ENCODE measurements at regions of chr9 and their contacts with region 1.

Region 1: DNA sequence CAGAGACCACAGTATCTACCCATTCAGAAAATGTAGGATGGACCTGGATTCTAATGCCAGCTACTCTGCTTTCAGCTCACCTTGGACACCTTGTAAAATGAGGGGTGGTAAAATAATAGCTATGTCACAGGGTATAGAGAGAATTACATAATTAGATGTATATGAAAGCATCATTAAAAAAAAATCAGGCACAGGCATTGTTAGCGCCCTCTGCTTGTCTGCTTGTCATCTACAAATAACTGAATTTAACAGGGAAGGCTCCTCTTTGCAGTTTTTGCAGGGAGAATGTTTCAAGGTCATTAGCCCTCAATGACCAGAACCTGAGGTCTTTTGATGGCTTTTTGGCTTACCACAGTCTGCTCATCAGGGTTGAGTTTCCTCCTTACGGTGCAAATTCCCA is 58.0 kb downstream of the GPR21 start:
- DNase-seq: no peak
- H3K4me3 ChIP-seq: no peak overlapping the region
- H3K27ac ChIP-seq: peak overlapping the region; percentile 67 to 69; a peak in 2 of 4 replicates
- H3K4me1 ChIP-seq: peaks cover 5 to 27% of the 10 kb centered on the region in 2 experiments; a peak in 3 of 4 replicates
- H3K27me3 ChIP-seq: no peaks in the 10 kb centered on the region
- CTCF ChIP-seq: peak; percentile 41
- EP300 ChIP-seq: no peak
- RAD21 ChIP-seq: no peak

Region 2: DNA sequence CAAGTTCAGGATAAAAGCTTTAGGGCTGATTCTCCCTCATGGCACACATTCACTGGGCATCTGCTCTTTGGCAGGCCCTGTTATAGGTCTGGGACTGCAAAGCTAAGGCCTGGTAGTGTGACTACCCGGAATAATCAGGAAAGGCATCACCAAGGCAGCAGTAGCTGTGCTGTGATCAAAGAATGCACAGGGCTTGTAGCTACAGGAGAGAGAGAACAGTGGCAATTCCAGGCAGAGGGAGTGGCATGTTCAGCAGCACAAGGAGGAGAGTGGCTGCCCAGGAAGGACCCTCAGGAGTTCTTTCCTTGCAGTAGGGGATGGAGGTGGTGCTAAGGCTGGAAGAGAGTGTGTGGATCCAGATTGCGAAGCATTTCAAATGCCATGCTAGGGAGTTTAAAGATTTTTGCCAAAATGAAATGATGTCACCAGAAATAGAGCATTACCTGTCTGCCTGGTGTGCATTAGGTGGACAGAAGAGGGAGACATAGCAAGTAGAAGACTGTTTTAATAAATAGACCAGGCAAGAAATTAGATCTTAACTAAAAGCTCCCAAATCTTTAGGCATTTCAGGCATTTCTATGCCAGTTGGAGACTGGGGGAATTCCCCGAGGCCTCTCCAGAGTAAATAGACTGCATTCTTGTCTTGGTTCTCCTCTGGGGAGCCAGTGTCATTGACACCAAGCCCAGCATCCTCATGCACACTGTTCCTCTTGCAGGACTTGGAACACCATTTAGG is 11.1 kb after region 1 on chr9:
- CTCF ChIA-PET with region 1: interaction called, 11 read pairs
- POLR2A ChIA-PET with region 1: no interaction called
- DNase-seq: no peak
- H3K4me3 ChIP-seq: no peak overlapping the region
- H3K27ac ChIP-seq: no peak overlapping the region; a peak in 1 of 4 replicates
- H3K4me1 ChIP-seq: no peaks in the 10 kb centered on the region; a peak in 1 of 4 replicates
- H3K27me3 ChIP-seq: no peaks in the 10 kb centered on the region
- CTCF ChIP-seq: peak; percentile 45
- EP300 ChIP-seq: no peak
- RAD21 ChIP-seq: peak; percentile 23; the same call in 1 of the 2 replicates